ENCODE measurements at regions of chr17 and their contacts with region 1.

Region 1: GRCh38 chr17:44522883-44523671 is 19.9 kb upstream of the GPATCH8 start:
- DNase-seq: peak; percentile 73
- H3K4me3 ChIP-seq: no peak overlapping the region
- H3K27ac ChIP-seq: no peak overlapping the region
- H3K4me1 ChIP-seq: no peaks in the 10 kb centered on the region
- H3K27me3 ChIP-seq: no peaks in the 10 kb centered on the region
- CTCF ChIP-seq: peak; percentile 55 to 81
- POLR2A ChIP-seq: no peak

Region 2: DNA sequence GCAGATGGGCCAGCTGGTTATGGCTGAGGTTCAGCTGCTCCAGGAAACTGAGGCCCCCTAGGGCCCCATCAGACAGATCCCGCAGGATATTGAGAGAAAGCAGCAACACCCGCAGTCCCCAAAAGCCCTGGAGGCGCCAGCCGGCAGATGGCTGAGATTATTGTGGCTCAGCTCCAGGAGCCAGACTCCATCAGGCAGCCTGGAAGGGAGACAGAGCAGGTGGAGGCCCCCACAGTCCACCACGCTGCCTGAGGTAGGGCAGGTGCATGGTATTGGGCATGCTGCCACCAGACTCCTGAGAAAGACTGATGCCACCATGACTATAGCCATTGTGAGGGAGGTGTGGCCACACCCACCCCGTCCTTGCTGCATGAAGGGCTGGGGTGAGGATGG is 498.8 kb before region 1 on chr17:
- CTCF ChIA-PET with region 1: no interaction called
- POLR2A ChIA-PET with region 1: no interaction called
- dilution Hi-C with region 1: no loop called
- intact Hi-C with region 1: no loop called
- DNase-seq: no peak
- H3K4me3 ChIP-seq: no peak overlapping the region
- H3K27ac ChIP-seq: no peak overlapping the region
- H3K4me1 ChIP-seq: no peaks in the 10 kb centered on the region
- H3K27me3 ChIP-seq: no peaks in the 10 kb centered on the region
- CTCF ChIP-seq: no peak
- POLR2A ChIP-seq: no peak

Region 3: DNA sequence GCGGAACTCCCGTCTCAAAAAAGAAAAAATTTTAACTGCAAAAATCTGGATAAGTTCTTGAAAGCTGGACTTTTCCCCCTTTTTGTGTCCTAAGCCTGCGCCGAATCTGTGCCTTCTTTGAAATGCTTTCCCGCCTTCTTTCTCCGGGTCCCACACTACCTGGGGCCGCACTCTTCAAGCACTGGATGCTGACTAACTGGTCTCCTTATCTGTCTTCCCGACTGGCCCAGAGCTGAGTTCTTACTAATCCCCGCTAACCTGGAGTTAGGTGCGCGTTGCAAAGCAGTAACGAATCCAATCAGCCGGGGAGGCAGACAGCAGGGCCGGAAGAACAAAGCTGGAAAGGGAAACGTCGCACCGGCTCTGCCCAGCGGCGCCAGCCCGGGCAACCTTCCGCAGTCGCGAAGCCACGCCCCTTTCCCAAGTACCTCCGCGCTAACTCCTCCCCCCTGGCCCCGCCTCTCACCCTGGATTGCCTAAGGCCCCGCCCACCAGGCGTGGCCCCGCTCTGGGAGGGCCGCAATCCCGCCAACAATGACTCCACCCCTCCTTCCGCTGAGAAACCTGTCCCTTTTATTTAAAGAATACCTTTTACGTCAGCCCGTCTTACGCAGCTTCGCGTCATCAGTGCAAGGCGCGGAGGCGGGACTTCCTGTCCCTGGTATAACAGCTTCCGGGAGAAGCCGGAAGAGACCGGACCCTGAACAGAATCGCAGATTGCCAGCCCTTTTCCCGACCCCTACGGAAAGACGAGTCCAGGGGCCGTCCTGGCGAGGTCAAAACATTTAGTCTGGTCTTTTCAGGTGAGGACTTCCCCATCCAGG is 336.6 kb before region 1 on chr17 and contains the start of gene TMUB2:
- CTCF ChIA-PET with region 1: no interaction called
- POLR2A ChIA-PET with region 1: no interaction called
- dilution Hi-C with region 1: no loop called
- intact Hi-C with region 1: no loop called
- DNase-seq: peak; percentile 100
- H3K4me3 ChIP-seq: peak within 1 kb of the TSS; percentile 82 to 96 (median 94)
- H3K27ac ChIP-seq: peak within 1 kb of the TSS; percentile 92
- H3K4me1 ChIP-seq: peaks cover 13% of the 10 kb centered on the region
- H3K27me3 ChIP-seq: no peaks in the 10 kb centered on the region
- CTCF ChIP-seq: no peak
- POLR2A ChIP-seq: peak; percentile 92
- total RNA-seq, gene TMUB2: 39.5 and 43.6 TPM in 2 replicates

Region 4: DNA sequence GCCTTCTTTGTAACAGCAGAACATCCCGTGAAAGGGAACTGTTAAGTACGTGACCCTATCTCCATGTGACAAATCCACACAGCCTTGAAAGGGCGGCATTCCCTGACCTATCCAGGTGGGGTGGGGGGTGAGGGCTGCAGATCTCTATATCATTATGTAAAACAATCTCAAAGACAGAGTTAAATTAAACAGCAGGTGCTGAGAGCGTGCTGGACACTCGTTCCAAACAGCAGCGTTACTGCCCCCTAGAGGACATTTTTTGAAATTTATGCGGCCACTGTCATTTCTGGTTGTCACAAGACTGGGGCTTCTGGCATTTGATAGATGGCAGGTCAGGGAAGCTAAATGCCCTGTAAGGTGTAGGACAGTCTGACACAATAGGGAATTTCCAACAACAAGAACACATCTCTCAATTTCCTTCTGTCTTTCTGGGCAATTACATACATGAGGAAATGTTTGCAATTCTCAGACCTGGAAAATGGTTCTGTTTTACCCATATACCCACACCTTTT is 191.8 kb before region 1 on chr17:
- CTCF ChIA-PET with region 1: interaction called, 13 read pairs
- POLR2A ChIA-PET with region 1: no interaction called
- dilution Hi-C with region 1: no loop called
- intact Hi-C with region 1: no loop called
- DNase-seq: peak; percentile 80
- H3K4me3 ChIP-seq: no peak overlapping the region
- H3K27ac ChIP-seq: no peak overlapping the region
- H3K4me1 ChIP-seq: no peaks in the 10 kb centered on the region
- H3K27me3 ChIP-seq: no peaks in the 10 kb centered on the region
- CTCF ChIP-seq: peak; percentile 68 to 72
- POLR2A ChIP-seq: no peak

Region 5: DNA sequence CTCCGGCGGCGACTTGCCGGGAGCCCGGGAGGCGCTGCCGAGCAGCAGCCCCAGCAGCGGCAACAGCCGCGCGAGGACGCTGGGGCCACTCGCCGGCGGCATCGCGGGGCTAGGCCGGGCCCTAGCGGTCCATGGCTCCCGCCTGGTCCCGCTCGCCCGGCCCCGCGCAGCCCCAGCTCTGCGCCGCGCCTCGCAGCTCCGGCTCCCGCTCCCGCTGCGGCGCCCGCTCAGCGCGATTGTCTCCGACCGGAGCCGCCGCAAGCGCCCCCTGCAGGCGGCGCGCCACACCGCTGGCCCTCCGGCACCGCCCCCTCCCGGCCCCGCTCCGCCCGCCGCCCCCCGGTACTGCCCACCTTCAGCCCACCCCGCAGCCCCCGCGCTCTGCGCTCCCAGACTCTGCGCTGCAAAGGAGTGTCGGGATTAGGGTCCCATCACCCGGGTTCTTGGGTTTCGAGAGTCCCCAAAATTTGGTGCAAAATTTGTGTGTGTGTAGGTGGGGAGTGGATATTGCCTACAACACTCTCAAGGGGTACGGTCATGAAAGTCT is 159.4 kb before region 1 on chr17 and contains the start of gene FAM171A2:
- CTCF ChIA-PET with region 1: interaction called, 22 read pairs
- POLR2A ChIA-PET with region 1: no interaction called
- dilution Hi-C with region 1: no loop called
- intact Hi-C with region 1: no loop called
- DNase-seq: peak; percentile 56
- H3K4me3 ChIP-seq: peak within 1 kb of the TSS; percentile 33 to 85 (median 37)
- H3K27ac ChIP-seq: no peak within 1 kb of the TSS
- H3K4me1 ChIP-seq: peaks cover 5% of the 10 kb centered on the region
- H3K27me3 ChIP-seq: peaks cover 6 to 8% of the 10 kb centered on the region in 2 experiments
- CTCF ChIP-seq: peak; percentile 53 to 60
- POLR2A ChIP-seq: peak; percentile 64
- total RNA-seq, gene FAM171A2: 12.0 and 13.4 TPM in 2 replicates

Region 6: GRCh38 chr17:44400226-44400847 is 122.7 kb before region 1 on chr17:
- CTCF ChIA-PET with region 1: interaction called, 86 read pairs
- POLR2A ChIA-PET with region 1: no interaction called
- dilution Hi-C with region 1: no loop called
- intact Hi-C with region 1: loop called (anchors 1 kb)
- DNase-seq: peak; percentile 36
- H3K4me3 ChIP-seq: no peak overlapping the region
- H3K27ac ChIP-seq: no peak overlapping the region
- H3K4me1 ChIP-seq: no peaks in the 10 kb centered on the region
- H3K27me3 ChIP-seq: no peaks in the 10 kb centered on the region
- CTCF ChIP-seq: peak; percentile 41
- POLR2A ChIP-seq: no peak

Region 7: GRCh38 chr17:44503147-44504029 is 19.7 kb before region 1 on chr17 and contains the start of gene GPATCH8:
- CTCF ChIA-PET with region 1: interaction called, 11 read pairs
- POLR2A ChIA-PET with region 1: no interaction called
- dilution Hi-C with region 1: no loop called
- intact Hi-C with region 1: no loop called
- DNase-seq: peak; percentile 96
- H3K4me3 ChIP-seq: peak within 1 kb of the TSS; percentile 71 to 95 (median 83)
- H3K27ac ChIP-seq: peak within 1 kb of the TSS; percentile 64
- H3K4me1 ChIP-seq: peaks cover 17% of the 10 kb centered on the region
- H3K27me3 ChIP-seq: no peaks in the 10 kb centered on the region
- CTCF ChIP-seq: no peak
- POLR2A ChIP-seq: peak; percentile 66
- total RNA-seq, gene GPATCH8: 35.3 and 39.1 TPM in 2 replicates

Region 8: DNA sequence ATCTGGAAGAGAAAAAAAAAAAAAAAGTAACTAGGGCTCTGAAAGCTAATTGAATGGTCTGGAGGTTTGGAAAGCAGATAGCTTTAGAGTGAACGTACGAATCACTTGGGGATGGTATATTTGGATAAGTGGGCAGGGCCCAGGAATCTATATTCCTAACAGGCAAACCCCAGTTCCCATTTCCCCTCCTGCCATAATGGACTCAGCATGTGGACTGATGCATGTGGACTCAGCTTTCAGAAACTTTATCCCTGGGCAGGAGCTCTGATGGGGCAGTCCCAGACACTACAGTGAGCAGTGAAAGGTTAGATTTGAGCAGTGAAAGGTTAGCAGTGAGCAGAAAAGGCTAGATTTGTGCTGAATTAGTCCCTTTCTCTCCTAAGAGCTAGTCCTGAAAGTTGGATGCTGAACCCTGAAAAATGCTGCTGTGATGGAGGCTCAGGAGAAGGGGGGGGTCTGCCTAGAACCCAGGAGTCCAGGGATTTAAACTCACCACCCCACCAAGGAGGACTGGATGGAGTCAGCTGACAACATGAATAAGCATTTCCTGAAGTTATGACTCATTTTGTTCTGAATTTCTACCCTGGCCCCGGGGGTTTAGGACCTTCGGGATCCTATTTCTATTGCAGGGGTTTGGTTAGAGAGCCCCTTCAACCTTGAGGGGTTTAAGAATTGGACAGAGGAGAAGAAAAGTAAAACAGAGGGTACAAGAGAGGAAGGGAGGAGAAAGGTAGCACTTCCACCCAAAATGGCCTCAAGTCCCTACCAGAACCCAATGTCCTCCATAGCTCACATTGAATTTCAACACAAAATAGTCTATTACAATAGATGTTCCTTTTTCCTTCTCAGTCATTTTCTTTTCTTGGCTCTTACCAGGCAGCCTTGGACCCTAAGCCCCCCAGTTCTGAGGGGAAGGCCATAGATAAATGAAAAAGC is 23.9 kb after region 1 on chr17:
- CTCF ChIA-PET with region 1: interaction called, 13 read pairs
- POLR2A ChIA-PET with region 1: no interaction called
- dilution Hi-C with region 1: no loop called
- intact Hi-C with region 1: no loop called
- DNase-seq: peak; percentile 61
- H3K4me3 ChIP-seq: no peak overlapping the region
- H3K27ac ChIP-seq: peak overlapping the region; percentile 71
- H3K4me1 ChIP-seq: peaks cover 13% of the 10 kb centered on the region
- H3K27me3 ChIP-seq: peaks cover 0 to 5% of the 10 kb centered on the region in 2 experiments
- CTCF ChIP-seq: no peak
- POLR2A ChIP-seq: no peak

Region 9: DNA sequence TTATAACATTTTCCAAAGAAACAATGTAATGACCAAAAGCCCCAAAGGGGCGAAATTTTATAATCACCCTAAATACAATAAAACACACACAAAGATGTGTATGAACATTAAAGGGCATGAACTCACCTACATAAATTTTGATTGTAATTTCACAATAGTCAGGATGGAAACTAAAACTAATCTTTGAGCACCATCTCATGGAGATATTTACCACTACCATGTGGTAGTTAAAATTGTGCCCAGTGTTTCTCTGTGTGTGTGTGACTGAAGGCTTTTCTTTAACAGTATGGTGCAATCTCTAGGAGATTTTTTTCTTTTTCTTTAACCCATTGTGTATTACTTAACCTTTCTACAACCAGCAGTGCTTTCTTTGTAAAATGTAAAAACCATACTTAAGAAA is 113.5 kb after region 1 on chr17:
- CTCF ChIA-PET with region 1: interaction called, 13 read pairs
- POLR2A ChIA-PET with region 1: no interaction called
- dilution Hi-C with region 1: no loop called
- intact Hi-C with region 1: no loop called
- DNase-seq: peak; percentile 60
- H3K4me3 ChIP-seq: no peak overlapping the region
- H3K27ac ChIP-seq: no peak overlapping the region
- H3K4me1 ChIP-seq: no peaks in the 10 kb centered on the region
- H3K27me3 ChIP-seq: peaks cover 2 to 9% of the 10 kb centered on the region in 2 experiments
- CTCF ChIP-seq: peak in 1 of 2 donors; percentile 4
- POLR2A ChIP-seq: no peak

Measured in endothelial cell of umbilical vein (primary cell).